ENCODE measurements at regions of chr20 and their contacts with region 1.

Region 1: DNA sequence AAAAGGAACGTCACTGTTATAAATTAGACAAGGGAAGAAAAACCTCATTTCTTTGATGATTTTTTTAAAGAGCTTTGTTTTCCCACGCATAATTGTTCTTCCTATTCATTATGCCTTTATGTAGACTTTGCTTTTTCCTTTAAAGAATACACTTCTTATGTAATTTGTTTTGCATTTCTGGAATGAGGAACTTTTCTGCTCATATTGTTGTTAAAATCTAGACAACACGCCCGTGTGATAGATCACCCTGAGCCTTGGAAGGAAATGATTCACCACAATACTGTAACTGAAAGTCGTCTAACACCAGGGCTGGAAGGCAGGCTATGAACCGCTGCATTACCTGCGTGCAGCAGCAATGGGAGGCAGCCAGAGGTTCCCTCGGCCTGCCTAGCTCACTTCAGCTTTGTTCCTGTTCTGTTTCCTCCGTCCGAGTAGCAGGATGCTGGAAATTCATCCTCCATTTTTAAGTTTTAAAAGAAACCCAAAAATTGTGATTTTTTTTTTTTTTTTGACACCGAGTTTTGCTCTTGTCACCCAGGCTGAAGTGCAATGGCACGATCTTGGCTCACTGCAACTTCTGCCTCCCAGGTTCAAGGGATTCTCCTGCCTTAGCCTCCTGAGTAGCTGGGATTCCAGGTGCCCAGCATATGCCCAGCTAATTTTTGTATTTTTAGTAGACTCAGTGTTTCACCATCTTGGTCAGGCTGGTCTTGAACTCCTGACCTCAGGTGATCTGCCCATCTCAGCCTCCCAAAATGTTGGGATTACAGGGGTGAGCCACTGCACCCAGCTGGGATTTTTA is 49.6 kb upstream of the ZNF217 start:
- DNase-seq: peak; percentile 80
- ATAC-seq: peak; percentile 98
- H3K4me3 Mint-ChIP-seq: peak overlapping the region; percentile 54
- H3K27ac Mint-ChIP-seq: peak overlapping the region; percentile 97
- H3K4me1 Mint-ChIP-seq: peaks cover 33% of the 10 kb centered on the region
- H3K27me3 Mint-ChIP-seq: no peaks in the 10 kb centered on the region

Region 2: DNA sequence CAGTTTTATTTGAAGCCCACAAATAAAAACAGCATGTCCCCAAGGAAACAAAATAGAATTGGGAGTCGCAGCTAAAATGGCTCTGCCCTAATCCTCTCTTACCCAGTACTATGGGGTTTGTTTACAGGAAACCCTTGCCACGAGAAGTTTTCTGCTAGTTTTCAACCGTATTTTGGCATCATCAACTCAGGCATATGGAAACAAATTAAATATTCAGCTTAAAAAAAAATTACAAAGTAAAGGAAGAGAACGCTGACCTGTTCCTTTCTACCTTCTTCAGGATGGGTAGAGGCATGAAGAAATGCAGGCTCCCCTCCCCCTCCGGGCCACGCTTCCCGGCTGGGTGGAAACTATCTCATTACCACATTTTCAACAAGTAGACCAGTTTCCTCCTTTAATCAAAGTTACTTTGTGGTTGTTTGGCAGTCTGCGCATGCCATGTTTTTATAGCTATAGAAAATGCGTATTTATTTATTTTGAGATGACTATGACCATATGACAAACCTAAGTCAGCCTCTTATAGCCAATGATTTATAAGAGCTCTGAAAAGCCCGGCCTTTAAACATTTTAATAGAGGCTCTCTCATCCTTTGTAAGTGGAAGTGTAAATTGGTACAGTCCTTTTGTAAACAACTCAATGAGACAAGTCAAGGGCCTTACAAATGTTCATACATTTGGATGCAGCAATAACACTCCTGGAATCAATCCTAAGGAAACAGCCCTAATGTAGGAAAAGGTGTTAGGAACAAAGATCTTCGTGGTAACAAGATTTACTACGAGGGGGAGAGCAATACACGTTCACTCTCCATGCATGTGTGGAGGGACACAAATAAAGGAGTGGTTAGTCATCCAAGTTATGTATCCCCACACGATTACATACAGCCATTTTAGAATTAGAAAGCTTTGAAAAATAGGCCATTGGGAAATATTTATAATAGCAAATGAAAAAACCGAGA is 33.5 kb before region 1 on chr20:
- CTCF ChIA-PET with region 1: interaction called, 4 read pairs
- POLR2A ChIA-PET with region 1: no interaction called
- intact Hi-C with region 1: loop called in 1 of 2 experiments (anchors 2 kb)
- DNase-seq: peak; percentile 87
- ATAC-seq: peak; percentile 82
- H3K4me3 Mint-ChIP-seq: peak overlapping the region; percentile 77
- H3K27ac Mint-ChIP-seq: peak overlapping the region; percentile 98
- H3K4me1 Mint-ChIP-seq: peaks cover 36% of the 10 kb centered on the region
- H3K27me3 Mint-ChIP-seq: no peaks in the 10 kb centered on the region

Region 3: GRCh38 chr20:53623454-53624211 is 19.6 kb before region 1 on chr20:
- CTCF ChIA-PET with region 1: interaction called, 7 read pairs
- POLR2A ChIA-PET with region 1: no interaction called
- intact Hi-C with region 1: loop called in 1 of 2 experiments (anchors 1 kb)
- DNase-seq: peak; percentile 65
- ATAC-seq: peak; percentile 78
- H3K4me3 Mint-ChIP-seq: peak overlapping the region; percentile 67
- H3K27ac Mint-ChIP-seq: peak overlapping the region; percentile 97
- H3K4me1 Mint-ChIP-seq: peaks cover 37% of the 10 kb centered on the region
- H3K27me3 Mint-ChIP-seq: no peaks in the 10 kb centered on the region

Region 4: GRCh38 chr20:53684971-53685797 is 42.0 kb after region 1 on chr20:
- CTCF ChIA-PET with region 1: interaction called, 5 read pairs
- POLR2A ChIA-PET with region 1: interaction called, 6 read pairs
- intact Hi-C with region 1: loop called in 1 of 2 experiments (anchors 5 kb)
- DNase-seq: no peak
- ATAC-seq: peak; percentile 7
- H3K4me3 Mint-ChIP-seq: no peak overlapping the region
- H3K27ac Mint-ChIP-seq: peak overlapping the region; percentile 56
- H3K4me1 Mint-ChIP-seq: peaks cover 26% of the 10 kb centered on the region
- H3K27me3 Mint-ChIP-seq: no peaks in the 10 kb centered on the region

Measured in activated CD4-positive, alpha-beta T cell treated with anti-CD3 and anti-CD28 coated beads for 36 hours (primary cell).